Activated naive CD4-positive, alpha-beta T cell treated with anti-CD3 and anti-CD28 coated beads for 36 hours (primary cell): ENCODE measurements at regions of chr6 and their contacts with region 1.

Region 1: GRCh38 chr6:154197196-154197860 is 158.3 kb downstream of the OPRM1 start:
- DNase-seq: no peak
- H3K4me3 Mint-ChIP-seq: peak overlapping the region; percentile 28
- H3K27ac Mint-ChIP-seq: no peak overlapping the region
- H3K4me1 Mint-ChIP-seq: peaks cover 60% of the 10 kb centered on the region
- H3K27me3 Mint-ChIP-seq: no peaks in the 10 kb centered on the region

Region 2: DNA sequence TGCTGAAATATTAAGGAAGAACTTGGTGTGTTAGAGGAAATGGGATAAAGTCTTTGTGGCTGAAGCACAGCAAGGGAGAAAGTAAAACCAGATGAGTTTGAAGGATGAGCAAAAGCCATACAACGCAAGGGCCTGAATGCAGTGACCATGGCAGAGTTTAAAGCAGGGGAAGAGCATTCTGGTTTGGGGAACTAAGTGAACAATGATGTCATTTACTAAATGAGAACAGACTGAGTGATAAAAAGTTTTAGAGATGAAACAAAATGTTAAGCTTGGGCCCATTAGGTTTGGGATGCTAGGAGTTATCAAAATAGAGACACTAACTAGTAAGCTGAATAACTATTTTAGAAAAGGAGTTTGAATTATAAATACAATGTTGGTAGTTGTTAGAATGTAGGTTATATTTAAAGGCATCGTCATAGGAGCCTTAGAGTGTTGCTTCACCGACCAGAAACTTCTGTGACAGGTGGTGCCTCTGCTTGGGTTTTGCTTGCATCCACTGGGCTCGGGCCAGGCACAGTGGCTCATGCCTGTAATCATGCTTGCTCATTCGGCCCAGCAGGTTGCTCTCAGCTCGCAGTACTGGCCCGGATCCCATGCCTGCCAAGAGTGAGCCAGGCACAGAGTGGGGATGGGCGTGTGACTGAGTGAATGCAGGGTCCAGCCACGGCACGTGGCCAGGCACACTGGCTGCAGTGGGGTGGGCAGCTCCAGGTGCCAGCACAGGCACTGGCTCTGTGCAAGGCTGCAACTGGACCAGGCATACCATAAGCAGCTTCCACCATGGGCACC is 195.6 kb before region 1 on chr6:
- CTCF ChIA-PET with region 1: no interaction called
- intact Hi-C with region 1: no loop called
- DNase-seq: no peak
- H3K4me3 Mint-ChIP-seq: no peak overlapping the region
- H3K27ac Mint-ChIP-seq: no peak overlapping the region
- H3K4me1 Mint-ChIP-seq: no peaks in the 10 kb centered on the region
- H3K27me3 Mint-ChIP-seq: peaks cover 3% of the 10 kb centered on the region

Region 3: GRCh38 chr6:154164397-154165165 is 32.7 kb before region 1 on chr6:
- CTCF ChIA-PET with region 1: no interaction called
- intact Hi-C with region 1: loop called (anchors 1 kb)
- DNase-seq: no peak
- H3K4me3 Mint-ChIP-seq: peak overlapping the region; percentile 23
- H3K27ac Mint-ChIP-seq: no peak overlapping the region
- H3K4me1 Mint-ChIP-seq: peaks cover 53% of the 10 kb centered on the region
- H3K27me3 Mint-ChIP-seq: no peaks in the 10 kb centered on the region

Region 4: DNA sequence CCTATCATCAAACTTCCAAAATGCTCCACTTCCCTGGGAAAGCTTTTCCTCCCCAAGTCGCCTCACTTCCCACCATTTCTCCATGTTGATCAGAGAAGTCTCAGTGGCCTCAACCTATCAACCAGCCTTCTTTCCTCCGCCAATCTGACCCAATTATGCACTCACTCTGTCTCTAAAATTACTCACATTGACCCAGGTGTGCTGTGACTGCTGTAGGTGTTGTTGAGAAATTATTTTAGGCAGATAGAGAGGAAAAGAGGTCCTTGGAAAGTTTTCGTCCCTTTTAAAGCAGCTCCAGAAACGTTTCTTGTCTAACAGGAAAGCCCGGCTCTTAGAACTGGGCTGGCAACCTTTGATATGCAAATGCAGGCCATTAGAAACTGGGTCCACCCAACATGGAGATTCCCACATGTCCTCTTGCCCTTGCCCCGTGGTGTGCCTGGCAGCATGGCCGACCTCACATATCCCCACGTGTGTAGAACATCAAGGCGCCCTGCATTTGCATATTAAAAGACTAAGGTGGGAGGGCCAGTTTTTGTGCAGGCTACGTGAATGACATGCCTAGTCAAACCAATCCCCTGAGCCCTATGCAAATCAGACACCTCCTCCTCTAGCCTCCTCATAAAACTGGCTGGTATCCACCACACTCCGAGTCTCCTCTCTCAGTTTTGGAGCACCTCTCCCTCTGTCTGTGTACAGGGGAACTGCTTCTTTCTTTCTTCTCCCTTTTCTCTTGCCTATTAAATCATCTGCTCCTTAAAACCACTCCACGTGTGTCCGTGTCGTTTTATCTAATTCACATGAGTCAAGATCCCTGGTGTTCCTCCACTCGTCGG is 146.4 kb after region 1 on chr6:
- CTCF ChIA-PET with region 1: no interaction called
- intact Hi-C with region 1: no loop called
- DNase-seq: no peak
- H3K4me3 Mint-ChIP-seq: no peak overlapping the region
- H3K27ac Mint-ChIP-seq: no peak overlapping the region
- H3K4me1 Mint-ChIP-seq: no peaks in the 10 kb centered on the region
- H3K27me3 Mint-ChIP-seq: no peaks in the 10 kb centered on the region

Region 5: GRCh38 chr6:154893917-154894316 is 696.6 kb after region 1 on chr6:
- CTCF ChIA-PET with region 1: no interaction called
- intact Hi-C with region 1: no loop called
- DNase-seq: no peak
- H3K4me3 Mint-ChIP-seq: no peak overlapping the region
- H3K27ac Mint-ChIP-seq: no peak overlapping the region
- H3K4me1 Mint-ChIP-seq: peaks cover 7% of the 10 kb centered on the region
- H3K27me3 Mint-ChIP-seq: no peaks in the 10 kb centered on the region